ENCODE measurements at regions of chr4 and their contacts with region 1.

Region 1: DNA sequence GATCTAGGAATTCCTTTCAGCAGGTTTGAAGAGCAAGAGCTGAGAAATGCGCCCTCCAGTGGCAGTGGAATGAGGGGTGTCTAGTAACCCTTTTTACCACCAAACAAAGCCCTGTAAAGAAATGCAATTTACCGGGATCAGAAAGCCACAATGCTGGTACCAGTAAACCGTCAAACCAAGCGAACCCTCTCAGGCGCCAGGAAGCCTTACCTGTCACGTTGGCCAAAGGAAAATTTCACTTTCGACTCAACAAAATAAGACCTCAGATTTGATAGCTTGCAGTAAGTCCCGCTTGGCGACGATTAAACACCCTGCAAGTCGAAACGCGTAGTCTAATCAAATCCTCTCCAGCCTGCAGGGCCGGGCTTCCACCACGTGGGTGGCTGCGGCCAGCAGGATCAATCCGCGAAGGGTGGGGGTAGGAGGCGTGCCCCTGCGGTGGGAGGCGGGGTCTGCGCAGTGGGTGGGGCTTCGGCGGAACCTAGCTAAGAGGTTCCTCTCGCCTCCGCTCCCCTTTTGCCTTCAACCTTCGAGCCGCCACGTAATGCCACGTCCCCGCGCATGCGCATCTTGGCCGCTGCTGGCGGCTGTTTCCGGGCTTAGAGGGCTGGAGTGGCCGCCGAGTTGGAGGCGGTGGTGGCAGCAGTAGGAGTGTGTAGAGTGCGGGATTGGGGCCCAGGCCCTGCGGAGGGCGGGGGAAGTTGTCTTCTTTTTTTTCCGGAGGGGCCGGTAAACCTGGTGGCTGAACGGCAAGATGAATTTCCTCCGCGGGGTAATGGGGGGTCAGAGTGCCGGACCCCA is at the start of gene USO1:
- DNase-seq: peak; percentile 99
- H3K4me3 Mint-ChIP-seq: peak within 1 kb of the TSS; percentile 99
- H3K27ac Mint-ChIP-seq: peak within 1 kb of the TSS; percentile 97
- H3K4me1 Mint-ChIP-seq: peaks cover 47% of the 10 kb centered on the region
- H3K27me3 Mint-ChIP-seq: no peaks in the 10 kb centered on the region
- total RNA-seq, gene USO1: 42.1 to 42.4 TPM

Region 2: DNA sequence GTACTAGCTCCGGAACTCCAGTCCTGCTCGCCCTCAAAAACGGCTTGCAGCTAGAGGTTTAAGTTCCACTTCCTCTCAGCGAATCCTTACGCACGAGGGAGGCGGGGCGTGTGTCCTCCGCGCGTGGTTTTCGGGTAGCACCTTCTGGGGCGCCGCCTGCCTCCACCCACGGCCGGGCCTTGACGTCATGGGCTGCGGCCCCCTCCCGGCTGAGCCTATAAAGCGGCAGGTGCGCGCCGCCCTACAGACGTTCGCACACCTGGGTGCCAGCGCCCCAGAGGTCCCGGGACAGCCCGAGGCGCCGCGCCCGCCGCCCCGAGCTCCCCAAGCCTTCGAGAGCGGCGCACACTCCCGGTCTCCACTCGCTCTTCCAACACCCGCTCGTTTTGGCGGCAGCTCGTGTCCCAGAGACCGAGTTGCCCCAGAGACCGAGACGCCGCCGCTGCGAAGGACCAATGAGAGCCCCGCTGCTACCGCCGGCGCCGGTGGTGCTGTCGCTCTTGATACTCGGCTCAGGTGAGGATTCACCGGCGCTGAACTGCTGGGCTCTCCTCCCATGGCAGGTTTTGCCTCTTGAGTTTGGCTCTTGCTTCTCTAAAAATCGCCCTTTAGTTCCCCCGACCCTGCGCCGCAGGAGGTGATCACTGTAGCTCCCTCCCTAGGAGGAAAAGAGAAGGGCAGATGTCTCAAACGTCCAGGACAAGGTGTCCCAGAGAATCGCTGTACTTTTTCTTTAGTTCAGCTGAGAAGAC is 1279.2 kb before region 1 on chr4 and contains the start of gene AREG:
- CTCF ChIA-PET with region 1: no interaction called
- intact Hi-C with region 1: loop called (anchors 10 kb)
- DNase-seq: peak; percentile 91
- H3K4me3 Mint-ChIP-seq: peak within 1 kb of the TSS; percentile 87
- H3K27ac Mint-ChIP-seq: peak within 1 kb of the TSS; percentile 75
- H3K4me1 Mint-ChIP-seq: peaks cover 4% of the 10 kb centered on the region
- H3K27me3 Mint-ChIP-seq: no peaks in the 10 kb centered on the region
- total RNA-seq, gene AREG: 1.5 to 2.1 TPM

Region 3: DNA sequence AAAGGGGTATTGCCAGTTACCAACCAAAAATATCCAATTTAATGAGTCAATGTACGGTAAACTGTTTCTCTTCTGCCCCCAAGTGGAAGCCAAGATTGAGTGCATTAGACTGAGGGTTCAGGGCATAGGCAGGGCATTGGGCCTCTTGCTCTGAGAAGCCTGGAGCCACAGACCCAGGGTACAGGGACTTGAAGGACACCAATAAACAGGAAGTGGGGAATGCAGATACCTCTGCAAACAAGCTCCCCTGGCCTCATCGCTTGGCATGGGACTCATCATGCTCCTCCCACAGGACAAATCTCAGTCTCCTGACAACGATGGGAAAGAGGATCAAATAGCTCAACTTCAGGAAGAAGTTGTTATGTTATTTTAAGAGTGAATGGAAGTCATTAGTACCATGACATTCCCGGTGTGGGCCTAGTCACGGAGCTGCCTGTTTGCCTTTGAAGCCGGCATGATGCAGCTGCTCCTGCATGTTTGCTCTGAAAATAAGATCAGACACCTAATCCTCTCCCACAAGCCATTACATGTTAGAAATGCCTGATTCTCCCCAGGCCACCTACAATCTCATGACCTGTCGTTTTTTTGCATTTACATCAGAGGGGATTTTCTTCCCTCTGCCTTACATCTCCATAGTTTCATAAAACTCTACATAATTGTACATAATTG is 434.2 kb before region 1 on chr4:
- CTCF ChIA-PET with region 1: no interaction called
- intact Hi-C with region 1: no loop called
- DNase-seq: no peak
- H3K4me3 Mint-ChIP-seq: no peak overlapping the region
- H3K27ac Mint-ChIP-seq: no peak overlapping the region
- H3K4me1 Mint-ChIP-seq: no peaks in the 10 kb centered on the region
- H3K27me3 Mint-ChIP-seq: no peaks in the 10 kb centered on the region

Region 4: GRCh38 chr4:75653845-75654503 is 70.3 kb before region 1 on chr4:
- CTCF ChIA-PET with region 1: interaction called, 14 read pairs
- intact Hi-C with region 1: loop called (anchors 1 kb)
- DNase-seq: no peak
- H3K4me3 Mint-ChIP-seq: no peak overlapping the region
- H3K27ac Mint-ChIP-seq: peak overlapping the region; percentile 78
- H3K4me1 Mint-ChIP-seq: peaks cover 43% of the 10 kb centered on the region
- H3K27me3 Mint-ChIP-seq: no peaks in the 10 kb centered on the region

Region 5: GRCh38 chr4:75698162-75698962 is 25.9 kb before region 1 on chr4:
- CTCF ChIA-PET with region 1: no interaction called
- intact Hi-C with region 1: loop called (anchors 1 kb)
- DNase-seq: peak; percentile 38
- H3K4me3 Mint-ChIP-seq: no peak overlapping the region
- H3K27ac Mint-ChIP-seq: peak overlapping the region; percentile 11
- H3K4me1 Mint-ChIP-seq: peaks cover 29% of the 10 kb centered on the region
- H3K27me3 Mint-ChIP-seq: no peaks in the 10 kb centered on the region

Region 6: DNA sequence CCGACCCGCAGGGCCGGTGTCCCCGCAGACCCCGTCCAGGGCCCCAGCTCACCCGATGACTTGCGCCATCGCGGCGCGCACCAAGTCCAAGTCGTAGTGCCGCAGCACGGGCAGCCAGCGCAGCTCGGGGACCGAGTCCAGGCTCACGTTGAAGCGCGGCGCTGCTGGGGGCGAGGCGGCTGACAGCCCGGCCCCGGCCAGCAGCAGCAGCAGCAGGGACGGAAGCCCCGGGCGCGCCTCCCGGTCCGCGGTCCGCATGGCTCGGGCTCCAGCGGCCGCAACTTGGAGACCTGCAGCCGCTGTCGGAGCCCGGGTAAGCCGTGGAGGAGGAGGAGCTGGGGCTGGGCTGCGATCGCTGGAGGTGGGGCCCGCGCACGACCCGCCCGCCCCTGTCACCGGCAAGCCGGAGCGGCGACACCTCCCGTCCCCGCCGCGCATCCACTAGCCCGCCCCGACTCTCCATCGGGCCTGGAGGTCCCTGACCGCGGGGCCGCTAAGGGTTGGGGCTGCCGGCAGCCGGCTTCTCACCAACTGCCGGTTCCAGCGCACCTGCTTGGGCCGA is 216.5 kb after region 1 on chr4 and contains the start of gene NAAA:
- CTCF ChIA-PET with region 1: no interaction called
- intact Hi-C with region 1: loop called (anchors 1 kb)
- DNase-seq: peak; percentile 85
- H3K4me3 Mint-ChIP-seq: peak within 1 kb of the TSS; percentile 96
- H3K27ac Mint-ChIP-seq: peak within 1 kb of the TSS; percentile 91
- H3K4me1 Mint-ChIP-seq: peaks cover 23% of the 10 kb centered on the region
- H3K27me3 Mint-ChIP-seq: no peaks in the 10 kb centered on the region
- total RNA-seq, gene NAAA: 24.4 to 27.1 TPM

Region 7: GRCh38 chr4:76213415-76214176 is 489.3 kb after region 1 on chr4 and contains the start of gene SCARB2:
- CTCF ChIA-PET with region 1: no interaction called
- intact Hi-C with region 1: loop called (anchors 1 kb)
- DNase-seq: peak; percentile 76
- H3K4me3 Mint-ChIP-seq: peak within 1 kb of the TSS; percentile 76
- H3K27ac Mint-ChIP-seq: peak within 1 kb of the TSS; percentile 74
- H3K4me1 Mint-ChIP-seq: peaks cover 31% of the 10 kb centered on the region
- H3K27me3 Mint-ChIP-seq: no peaks in the 10 kb centered on the region
- total RNA-seq, gene SCARB2: 5.4 to 7.8 TPM

Measured in activated naive CD4-positive, alpha-beta T cell treated with anti-CD3 and anti-CD28 coated beads for 36 hours (primary cell).